Activated naive CD4-positive, alpha-beta T cell treated with anti-CD3 and anti-CD28 coated beads, Interleukin-2, amount 10 ng/mL, durations not matched to agents 7 days and 5 days (primary cell): ENCODE measurements at regions of chr17 and their contacts with region 1.

Region 1: GRCh38 chr17:2786176-2786881 is 9.9 kb upstream of the RAP1GAP2 start:
- DNase-seq: peak; percentile 94
- H3K4me3 Mint-ChIP-seq: no peak overlapping the region
- H3K27ac Mint-ChIP-seq: no peak overlapping the region
- H3K4me1 Mint-ChIP-seq: peaks cover 38% of the 10 kb centered on the region
- H3K27me3 Mint-ChIP-seq: peaks cover 61% of the 10 kb centered on the region

Region 2: GRCh38 chr17:2796164-2797125 is 10.1 kb after region 1 on chr17 and contains the start of gene RAP1GAP2:
- CTCF ChIA-PET with region 1: interaction called, 21 read pairs
- DNase-seq: peak; percentile 91
- H3K4me3 Mint-ChIP-seq: peak within 1 kb of the TSS; percentile 93
- H3K27ac Mint-ChIP-seq: peak within 1 kb of the TSS; percentile 78
- H3K4me1 Mint-ChIP-seq: peaks cover 81% of the 10 kb centered on the region
- H3K27me3 Mint-ChIP-seq: peaks cover 75% of the 10 kb centered on the region

Region 3: DNA sequence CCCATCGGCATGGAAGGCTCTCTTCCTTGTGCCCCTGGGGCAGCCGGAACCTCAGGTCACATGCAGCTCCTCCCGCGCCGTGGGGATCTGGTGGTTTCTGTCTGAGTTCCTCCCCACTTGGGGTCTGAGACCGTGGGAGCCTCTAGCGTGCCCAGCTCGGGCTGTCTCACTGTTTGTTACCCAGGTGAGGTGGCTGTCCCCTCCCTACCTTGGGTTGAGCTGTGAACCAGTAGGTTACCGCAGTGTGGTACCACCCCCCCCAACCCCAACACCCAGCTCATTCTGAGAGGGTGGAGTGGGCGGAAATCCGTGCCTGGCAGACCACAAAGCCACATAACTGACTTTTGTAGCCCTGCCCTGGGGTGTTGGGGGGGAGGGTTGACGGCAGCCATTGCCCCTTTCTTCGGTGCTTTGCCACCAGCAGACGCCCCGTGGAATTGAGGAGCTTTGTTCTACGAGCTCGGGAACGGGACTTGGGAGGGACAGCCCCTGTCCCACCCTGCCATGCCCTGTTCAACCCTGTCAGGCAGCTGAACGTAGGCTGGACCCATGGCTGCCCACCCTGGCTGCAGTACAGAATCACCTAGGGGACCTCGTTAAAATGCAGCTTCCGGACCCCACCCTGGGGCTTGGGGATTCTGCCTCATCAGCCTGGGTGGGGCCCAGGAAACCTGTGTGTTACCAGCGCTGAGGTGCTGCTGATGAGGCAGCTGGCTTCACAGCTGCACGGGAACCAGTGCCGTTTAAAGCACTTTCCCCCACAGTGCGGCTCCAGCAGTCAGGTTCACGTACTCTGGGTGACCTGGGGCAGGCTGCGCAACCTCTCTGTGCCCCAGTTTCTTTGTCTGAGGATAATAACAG is 28.4 kb after region 1 on chr17:
- CTCF ChIA-PET with region 1: interaction called, 22 read pairs
- DNase-seq: peak; percentile 97
- H3K4me3 Mint-ChIP-seq: peak overlapping the region; percentile 66
- H3K27ac Mint-ChIP-seq: peak overlapping the region; percentile 93
- H3K4me1 Mint-ChIP-seq: peaks cover 48% of the 10 kb centered on the region
- H3K27me3 Mint-ChIP-seq: peaks cover 62% of the 10 kb centered on the region

Region 4: GRCh38 chr17:2828397-2829038 is 42.2 kb after region 1 on chr17:
- CTCF ChIA-PET with region 1: interaction called, 16 read pairs
- DNase-seq: peak; percentile 84
- H3K4me3 Mint-ChIP-seq: no peak overlapping the region
- H3K27ac Mint-ChIP-seq: no peak overlapping the region
- H3K4me1 Mint-ChIP-seq: peaks cover 42% of the 10 kb centered on the region
- H3K27me3 Mint-ChIP-seq: peaks cover 42% of the 10 kb centered on the region

Region 5: GRCh38 chr17:2837147-2837561 is 50.8 kb after region 1 on chr17:
- CTCF ChIA-PET with region 1: interaction called, 24 read pairs
- DNase-seq: peak; percentile 56
- H3K4me3 Mint-ChIP-seq: no peak overlapping the region
- H3K27ac Mint-ChIP-seq: no peak overlapping the region
- H3K4me1 Mint-ChIP-seq: peaks cover 19% of the 10 kb centered on the region
- H3K27me3 Mint-ChIP-seq: peaks cover 29% of the 10 kb centered on the region

Region 6: GRCh38 chr17:2847381-2848333 is 61.3 kb after region 1 on chr17:
- CTCF ChIA-PET with region 1: interaction called, 19 read pairs
- DNase-seq: no peak
- H3K4me3 Mint-ChIP-seq: no peak overlapping the region
- H3K27ac Mint-ChIP-seq: no peak overlapping the region
- H3K4me1 Mint-ChIP-seq: peaks cover 18% of the 10 kb centered on the region
- H3K27me3 Mint-ChIP-seq: peaks cover 45% of the 10 kb centered on the region